ENCODE measurements at regions of chrX and their contacts with region 1.

Region 1: GRCh38 chrX:14039344-14039743 is 9.7 kb upstream of the GEMIN8 start:
- DNase-seq: no peak
- H3K4me3 ChIP-seq: no peak overlapping the region
- H3K27ac ChIP-seq: no peak overlapping the region
- H3K4me1 ChIP-seq: no peaks in the 10 kb centered on the region
- H3K27me3 ChIP-seq: no peaks in the 10 kb centered on the region
- CTCF ChIP-seq: peak; percentile 49 to 68 (median 56)

Region 2: DNA sequence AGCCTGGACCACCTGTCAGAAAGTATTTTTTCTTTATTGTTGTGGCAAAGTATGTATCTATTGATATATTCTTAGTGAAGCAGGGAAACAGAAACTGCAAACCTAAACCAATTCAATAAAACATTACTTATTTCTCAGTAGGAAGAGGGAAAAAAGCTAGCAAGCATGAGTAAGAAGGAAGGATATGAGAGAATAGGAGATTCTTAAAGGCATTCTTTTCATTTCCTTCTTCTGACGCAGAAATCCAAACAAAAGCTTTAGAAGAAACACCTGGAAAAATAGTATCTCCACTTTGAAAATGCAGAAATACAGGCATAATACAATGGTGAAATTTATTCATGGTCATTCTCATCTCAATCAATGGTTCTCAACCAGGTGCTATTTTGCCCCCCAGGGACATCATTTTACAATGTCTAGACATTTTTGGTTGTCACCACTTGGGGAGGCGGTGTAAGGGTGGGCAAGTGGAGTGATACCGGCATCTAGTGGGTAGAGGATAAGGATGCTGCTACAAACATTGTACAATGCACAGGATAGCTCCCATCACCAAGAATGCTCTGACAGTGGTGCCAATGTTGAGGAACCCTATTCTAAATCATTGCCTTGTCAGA is 697.7 kb before region 1 on chrX:
- intact Hi-C with region 1: no loop called
- DNase-seq: no peak
- H3K4me3 ChIP-seq: no peak overlapping the region
- H3K27ac ChIP-seq: no peak overlapping the region
- H3K4me1 ChIP-seq: no peaks in the 10 kb centered on the region
- H3K27me3 ChIP-seq: no peaks in the 10 kb centered on the region
- CTCF ChIP-seq: no peak

Region 3: DNA sequence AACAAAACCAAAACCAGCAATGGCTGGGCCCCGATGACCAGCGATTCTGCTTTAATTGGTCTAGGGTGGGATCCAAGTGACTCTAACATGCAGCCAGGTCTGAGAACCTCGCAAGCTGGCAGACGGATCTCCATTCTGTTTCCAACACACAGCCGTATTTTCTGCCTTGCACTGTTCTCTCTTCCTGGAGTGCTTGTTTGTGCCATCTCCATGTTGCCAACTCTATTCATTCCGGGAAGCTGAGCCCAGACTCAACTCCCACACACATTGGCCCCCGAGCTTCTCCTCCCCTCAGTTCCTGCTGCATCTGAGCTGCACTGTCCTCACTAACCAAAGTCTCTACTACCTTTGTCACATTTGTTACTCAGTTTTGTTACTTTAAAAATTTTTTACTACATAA is 45.2 kb before region 1 on chrX:
- intact Hi-C with region 1: no loop called
- DNase-seq: no peak
- H3K4me3 ChIP-seq: no peak overlapping the region
- H3K27ac ChIP-seq: no peak overlapping the region
- H3K4me1 ChIP-seq: no peaks in the 10 kb centered on the region
- H3K27me3 ChIP-seq: no peaks in the 10 kb centered on the region
- CTCF ChIP-seq: no peak

Region 4: DNA sequence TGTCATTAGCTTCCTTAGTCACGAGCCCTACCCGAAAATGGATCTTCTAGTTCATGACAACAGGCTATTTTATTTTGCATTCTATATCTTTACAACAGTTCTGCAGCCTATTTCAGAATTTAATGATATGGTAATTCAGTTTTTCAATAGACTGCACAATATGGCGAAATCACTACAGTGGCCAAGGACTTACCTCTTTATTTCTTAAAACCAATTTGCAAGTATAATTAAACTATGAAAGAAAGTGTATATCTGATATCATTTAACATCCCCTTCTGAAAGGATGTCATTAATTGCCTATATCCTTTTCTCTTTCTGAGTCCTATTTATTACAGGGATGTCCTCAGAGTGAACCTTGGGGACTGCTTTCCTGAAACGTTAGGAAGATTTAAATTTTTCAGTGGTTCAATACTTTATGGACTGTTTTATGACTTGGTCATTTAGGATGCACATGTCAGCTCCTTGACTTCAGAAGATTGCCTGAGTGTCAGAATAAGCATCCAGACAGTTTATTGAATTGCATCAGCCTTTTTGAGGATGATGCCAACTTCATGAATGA is 181.1 kb after region 1 on chrX:
- intact Hi-C with region 1: no loop called
- DNase-seq: no peak
- H3K4me3 ChIP-seq: no peak overlapping the region
- H3K27ac ChIP-seq: no peak overlapping the region
- H3K4me1 ChIP-seq: no peaks in the 10 kb centered on the region
- H3K27me3 ChIP-seq: no peaks in the 10 kb centered on the region
- CTCF ChIP-seq: no peak

Region 5: GRCh38 chrX:15143050-15143824 is 1103.9 kb after region 1 on chrX:
- intact Hi-C with region 1: loop called (anchors 2 kb)
- DNase-seq: no peak
- H3K4me3 ChIP-seq: no peak overlapping the region
- H3K27ac ChIP-seq: no peak overlapping the region
- H3K4me1 ChIP-seq: no peaks in the 10 kb centered on the region
- H3K27me3 ChIP-seq: no peaks in the 10 kb centered on the region
- CTCF ChIP-seq: peak in 2 of 3 experiments; percentile 45 to 60

Region 6: DNA sequence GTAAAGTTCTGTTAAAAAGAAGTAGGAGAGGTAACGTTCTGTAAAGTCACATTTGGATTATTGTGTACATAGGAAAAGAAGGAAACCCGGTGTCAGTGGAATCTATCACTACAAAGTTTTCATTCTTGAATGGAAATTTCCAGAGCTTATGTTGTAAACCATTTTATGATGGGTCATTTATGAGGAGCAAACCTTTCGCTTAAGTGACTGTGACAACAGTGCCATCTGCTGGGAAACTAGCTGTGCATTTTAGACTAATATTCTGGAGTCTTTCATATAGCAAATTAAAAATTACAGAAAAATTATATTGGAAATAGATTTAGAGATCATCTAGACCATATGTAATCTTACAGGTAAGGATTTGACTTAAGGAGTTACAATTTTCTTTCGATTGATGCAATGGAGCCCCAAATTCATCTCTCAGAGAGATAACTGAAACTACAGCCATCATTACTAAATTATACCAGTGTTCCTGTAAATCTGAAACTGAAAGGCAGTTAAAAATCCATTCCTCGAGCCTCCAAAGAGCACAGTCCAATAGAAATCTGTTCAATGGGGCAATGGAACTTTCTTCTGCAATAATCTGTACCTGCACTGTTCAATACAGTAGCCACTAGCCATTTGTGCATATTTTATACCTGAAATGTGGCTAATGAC is 1203.7 kb after region 1 on chrX:
- intact Hi-C with region 1: loop called (anchors 5 kb)
- DNase-seq: no peak
- H3K4me3 ChIP-seq: no peak overlapping the region
- H3K27ac ChIP-seq: no peak overlapping the region
- H3K4me1 ChIP-seq: no peaks in the 10 kb centered on the region
- H3K27me3 ChIP-seq: no peaks in the 10 kb centered on the region
- CTCF ChIP-seq: peak in 2 of 3 experiments; percentile 26 to 51